CD8-positive, alpha-beta T cell (primary cell): ENCODE measurements at regions of chr2 and their contacts with region 1.

Region 1: GRCh38 chr2:174697255-174697654 is 67.0 kb downstream of the CHRNA1 start:
- DNase-seq: peak; percentile 20 to 79 (median 61)
- ATAC-seq: peak; percentile 91
- H3K4me3 ChIP-seq: no peak overlapping the region
- H3K4me3 Mint-ChIP-seq: no peak overlapping the region
- H3K27ac ChIP-seq: no peak overlapping the region
- H3K27ac Mint-ChIP-seq: no peak overlapping the region
- H3K4me1 ChIP-seq: no peaks in the 10 kb centered on the region
- H3K4me1 Mint-ChIP-seq: peaks cover 7% of the 10 kb centered on the region
- H3K27me3 ChIP-seq: no peaks in the 10 kb centered on the region
- H3K27me3 Mint-ChIP-seq: no peaks in the 10 kb centered on the region
- CTCF ChIP-seq: peak; percentile 79

Region 2: GRCh38 chr2:174536304-174536703 is 161.0 kb before region 1 on chr2:
- CTCF ChIA-PET with region 1: no interaction called
- POLR2A ChIA-PET with region 1: no interaction called
- intact Hi-C with region 1: no loop called
- DNase-seq: no peak
- ATAC-seq: no peak
- H3K4me3 ChIP-seq: no peak overlapping the region
- H3K4me3 Mint-ChIP-seq: no peak overlapping the region
- H3K27ac ChIP-seq: no peak overlapping the region
- H3K27ac Mint-ChIP-seq: no peak overlapping the region
- H3K4me1 ChIP-seq: no peaks in the 10 kb centered on the region
- H3K4me1 Mint-ChIP-seq: peaks cover 6% of the 10 kb centered on the region
- H3K27me3 ChIP-seq: peaks cover 0 to 2% of the 10 kb centered on the region in 2 experiments
- H3K27me3 Mint-ChIP-seq: peaks cover 4% of the 10 kb centered on the region
- CTCF ChIP-seq: no peak

Region 3: DNA sequence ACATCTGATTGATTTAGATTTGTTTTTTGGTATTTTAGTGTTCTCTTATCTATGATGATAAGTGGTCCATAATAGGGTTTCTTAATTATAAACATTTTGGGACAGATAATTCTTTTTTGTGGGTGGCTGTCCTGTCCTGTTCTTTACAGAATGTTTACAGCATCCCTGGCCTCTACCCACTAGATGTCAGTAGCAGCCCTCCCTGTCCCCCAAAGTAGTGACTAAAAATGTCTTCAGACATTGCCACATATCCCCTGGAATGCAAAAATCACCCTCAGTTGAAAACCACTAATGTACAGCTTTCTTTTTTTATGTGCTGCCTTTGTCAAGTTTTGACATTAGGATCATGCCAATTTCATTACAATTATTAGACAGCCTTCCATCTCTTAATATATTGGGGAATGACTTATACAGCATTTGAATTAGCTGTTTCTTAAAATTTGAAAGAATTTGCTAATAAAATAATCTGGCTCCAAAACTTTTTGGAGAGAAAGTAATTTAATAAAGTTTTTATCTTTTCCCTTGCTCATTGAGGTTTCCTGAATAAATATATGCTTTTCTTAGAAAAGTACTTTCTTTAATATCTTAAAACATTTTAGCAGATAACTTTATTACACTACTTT is 119.2 kb before region 1 on chr2:
- CTCF ChIA-PET with region 1: interaction called, 12 read pairs
- POLR2A ChIA-PET with region 1: no interaction called
- intact Hi-C with region 1: no loop called
- DNase-seq: peak in 6 of 9 experiments; percentile 33 to 87 (median 67)
- ATAC-seq: peak; percentile 84
- H3K4me3 ChIP-seq: no peak overlapping the region
- H3K4me3 Mint-ChIP-seq: no peak overlapping the region
- H3K27ac ChIP-seq: peak overlapping the region in 1 of 2 experiments; percentile 5
- H3K27ac Mint-ChIP-seq: peak overlapping the region; percentile 83
- H3K4me1 ChIP-seq: peaks cover 65% of the 10 kb centered on the region
- H3K4me1 Mint-ChIP-seq: peaks cover 80% of the 10 kb centered on the region
- H3K27me3 ChIP-seq: no peaks in the 10 kb centered on the region
- H3K27me3 Mint-ChIP-seq: no peaks in the 10 kb centered on the region
- CTCF ChIP-seq: peak; percentile 83

Region 4: GRCh38 chr2:174717273-174717672 is 20.0 kb after region 1 on chr2:
- CTCF ChIA-PET with region 1: interaction called, 14 read pairs
- POLR2A ChIA-PET with region 1: interaction called, 3 read pairs
- intact Hi-C with region 1: no loop called
- DNase-seq: peak in 3 of 9 experiments; percentile 52 to 71 (median 52)
- ATAC-seq: peak; percentile 77
- H3K4me3 ChIP-seq: peak overlapping the region; percentile 13 to 41
- H3K4me3 Mint-ChIP-seq: peak overlapping the region; percentile 67
- H3K27ac ChIP-seq: no peak overlapping the region
- H3K27ac Mint-ChIP-seq: peak overlapping the region; percentile 56
- H3K4me1 ChIP-seq: peaks cover 32% of the 10 kb centered on the region
- H3K4me1 Mint-ChIP-seq: peaks cover 31% of the 10 kb centered on the region
- H3K27me3 ChIP-seq: no peaks in the 10 kb centered on the region
- H3K27me3 Mint-ChIP-seq: no peaks in the 10 kb centered on the region
- CTCF ChIP-seq: no peak

Region 5: DNA sequence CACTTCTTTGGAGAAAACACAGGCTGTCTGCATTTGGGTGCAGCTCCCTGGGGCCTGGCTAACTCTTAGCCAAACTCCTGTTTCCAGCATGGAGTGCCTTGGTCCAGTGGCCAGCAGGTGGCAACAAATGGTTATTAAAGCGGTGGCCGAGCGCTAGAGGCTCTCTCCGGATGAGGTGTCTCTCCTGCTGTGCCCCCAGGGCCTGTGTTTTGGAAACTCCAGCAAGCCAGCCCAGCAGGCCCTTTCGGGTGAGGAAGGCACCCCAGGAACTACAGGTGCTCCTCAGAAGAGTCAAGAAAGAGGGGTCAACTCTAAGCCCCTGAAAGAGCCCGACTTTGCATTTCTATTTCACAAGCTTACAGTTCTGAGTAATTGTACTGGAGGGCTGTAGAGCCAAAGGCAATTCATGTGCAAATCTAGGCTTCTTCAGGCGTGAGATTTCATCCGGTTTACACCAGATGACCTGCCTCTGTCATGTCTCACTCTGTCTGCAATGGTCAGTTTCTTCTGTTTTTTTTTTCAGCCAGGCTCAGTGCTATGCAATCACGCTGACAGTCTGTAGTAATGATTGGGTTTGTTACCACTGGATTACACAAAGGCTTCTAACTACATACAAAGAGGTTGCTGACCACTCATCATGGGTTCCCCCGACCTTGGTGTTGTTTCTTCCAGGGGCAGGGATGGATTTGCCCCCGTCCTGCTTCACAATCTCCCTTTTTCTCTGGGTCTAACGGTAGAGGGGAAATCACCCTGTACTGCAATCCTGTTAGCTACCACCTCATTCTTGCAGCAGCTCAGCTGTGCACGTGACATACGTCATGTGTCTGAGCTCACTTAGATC is 74.6 kb after region 1 on chr2:
- CTCF ChIA-PET with region 1: interaction called, 33 read pairs
- POLR2A ChIA-PET with region 1: no interaction called
- intact Hi-C with region 1: loop called in 1 of 2 experiments (anchors 2 kb)
- DNase-seq: peak in 6 of 9 experiments; percentile 23 to 68 (median 51)
- ATAC-seq: peak; percentile 60
- H3K4me3 ChIP-seq: no peak overlapping the region
- H3K4me3 Mint-ChIP-seq: no peak overlapping the region
- H3K27ac ChIP-seq: no peak overlapping the region
- H3K27ac Mint-ChIP-seq: peak overlapping the region; percentile 3
- H3K4me1 ChIP-seq: peaks cover 14% of the 10 kb centered on the region
- H3K4me1 Mint-ChIP-seq: peaks cover 21% of the 10 kb centered on the region
- H3K27me3 ChIP-seq: no peaks in the 10 kb centered on the region
- H3K27me3 Mint-ChIP-seq: no peaks in the 10 kb centered on the region
- CTCF ChIP-seq: no peak

Region 6: DNA sequence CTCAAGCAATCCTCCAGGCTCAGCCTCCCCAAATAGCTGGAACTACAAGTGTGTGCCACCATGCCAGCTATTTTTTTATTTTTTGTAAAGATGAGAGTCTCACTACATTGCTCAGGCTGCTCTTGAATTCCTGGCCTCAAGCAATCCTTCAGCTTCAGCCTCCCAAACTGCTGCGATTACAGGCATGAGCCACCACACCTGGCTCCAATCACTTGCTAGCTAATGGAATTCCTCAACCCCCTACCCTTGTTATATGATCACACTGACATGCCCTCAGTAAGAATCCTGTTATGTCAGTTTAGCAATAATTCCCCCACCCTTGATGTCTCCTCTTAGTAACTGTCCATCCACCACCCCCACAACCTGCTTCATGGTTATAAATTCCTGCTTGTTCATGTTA is 295.6 kb after region 1 on chr2:
- CTCF ChIA-PET with region 1: interaction called, 68 read pairs
- POLR2A ChIA-PET with region 1: interaction called, 6 read pairs
- intact Hi-C with region 1: loop called (anchors 1 kb)
- DNase-seq: no peak
- ATAC-seq: no peak
- H3K4me3 ChIP-seq: no peak overlapping the region
- H3K4me3 Mint-ChIP-seq: no peak overlapping the region
- H3K27ac ChIP-seq: no peak overlapping the region
- H3K27ac Mint-ChIP-seq: no peak overlapping the region
- H3K4me1 ChIP-seq: no peaks in the 10 kb centered on the region
- H3K4me1 Mint-ChIP-seq: peaks cover 6% of the 10 kb centered on the region
- H3K27me3 ChIP-seq: no peaks in the 10 kb centered on the region
- H3K27me3 Mint-ChIP-seq: peaks cover 12% of the 10 kb centered on the region
- CTCF ChIP-seq: no peak

Region 7: DNA sequence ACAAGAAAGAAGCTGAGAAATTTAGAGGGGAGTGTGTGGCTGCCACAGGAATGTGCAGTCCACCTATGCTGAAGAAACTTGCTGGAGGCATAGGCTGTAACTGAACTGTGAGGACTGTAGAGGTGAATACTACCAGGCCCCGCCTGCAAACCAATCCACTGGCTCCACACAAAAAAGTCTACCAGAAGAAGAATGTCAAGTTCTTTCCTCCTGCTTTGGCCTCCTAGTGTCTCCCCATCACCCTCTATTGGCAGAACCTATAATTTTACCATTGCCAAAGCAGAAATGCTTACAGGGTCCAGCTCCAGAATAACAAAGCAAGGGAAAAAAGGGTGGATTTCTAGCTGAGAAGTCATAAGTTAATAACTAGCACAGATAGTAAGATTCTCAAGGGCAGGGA is 490.1 kb after region 1 on chr2:
- CTCF ChIA-PET with region 1: no interaction called
- POLR2A ChIA-PET with region 1: no interaction called
- intact Hi-C with region 1: loop called (anchors 5 to 10 kb)
- DNase-seq: peak in 2 of 9 experiments; percentile 24 to 40
- ATAC-seq: peak; percentile 68
- H3K4me3 ChIP-seq: no peak overlapping the region
- H3K4me3 Mint-ChIP-seq: no peak overlapping the region
- H3K27ac ChIP-seq: no peak overlapping the region
- H3K27ac Mint-ChIP-seq: no peak overlapping the region
- H3K4me1 ChIP-seq: no peaks in the 10 kb centered on the region
- H3K4me1 Mint-ChIP-seq: no peaks in the 10 kb centered on the region
- H3K27me3 ChIP-seq: no peaks in the 10 kb centered on the region
- H3K27me3 Mint-ChIP-seq: peaks cover 14% of the 10 kb centered on the region
- CTCF ChIP-seq: peak; percentile 11

Region 8: DNA sequence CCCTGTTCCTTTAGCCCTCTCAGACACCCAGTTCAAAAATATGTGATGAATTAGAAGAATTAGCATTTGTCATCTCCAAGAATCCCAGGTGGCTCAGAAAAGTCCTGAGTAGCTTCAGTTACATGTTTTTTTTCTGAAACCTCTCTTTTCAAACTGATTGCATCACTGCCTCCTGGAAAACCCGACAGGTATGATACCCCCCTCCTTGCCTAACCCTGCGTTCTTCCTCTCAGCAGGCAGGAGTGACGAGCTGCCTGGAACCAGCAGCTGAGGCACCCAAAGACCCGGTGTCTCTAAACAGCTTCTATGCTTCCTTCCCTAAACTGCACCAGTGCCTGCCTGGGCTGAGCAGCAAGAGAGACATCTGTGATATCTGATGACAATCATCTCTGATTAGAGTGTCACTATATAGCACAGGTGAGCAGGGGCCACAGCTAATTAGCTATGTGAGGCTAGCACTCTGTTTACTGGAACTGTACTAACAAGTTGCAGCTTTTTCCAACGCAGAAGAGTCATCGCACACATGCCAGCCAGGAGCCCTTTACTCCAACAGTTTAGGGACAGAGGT is 860.6 kb after region 1 on chr2:
- CTCF ChIA-PET with region 1: no interaction called
- POLR2A ChIA-PET with region 1: no interaction called
- intact Hi-C with region 1: no loop called
- DNase-seq: no peak
- ATAC-seq: no peak
- H3K4me3 ChIP-seq: no peak overlapping the region
- H3K4me3 Mint-ChIP-seq: no peak overlapping the region
- H3K27ac ChIP-seq: no peak overlapping the region
- H3K27ac Mint-ChIP-seq: no peak overlapping the region
- H3K4me1 ChIP-seq: no peaks in the 10 kb centered on the region
- H3K4me1 Mint-ChIP-seq: no peaks in the 10 kb centered on the region
- H3K27me3 ChIP-seq: no peaks in the 10 kb centered on the region
- H3K27me3 Mint-ChIP-seq: peaks cover 13% of the 10 kb centered on the region
- CTCF ChIP-seq: no peak

Region 9: GRCh38 chr2:176096986-176097819 is 1399.9 kb after region 1 on chr2:
- CTCF ChIA-PET with region 1: interaction called, 3 read pairs
- POLR2A ChIA-PET with region 1: no interaction called
- intact Hi-C with region 1: loop called in 1 of 2 experiments (anchors 5 kb)
- DNase-seq: peak in 8 of 9 experiments; percentile 25 to 76 (median 56)
- ATAC-seq: peak; percentile 76
- H3K4me3 ChIP-seq: peak overlapping the region; percentile 38 to 51
- H3K4me3 Mint-ChIP-seq: peak overlapping the region; percentile 71
- H3K27ac ChIP-seq: no peak overlapping the region
- H3K27ac Mint-ChIP-seq: no peak overlapping the region
- H3K4me1 ChIP-seq: peaks cover 27% of the 10 kb centered on the region
- H3K4me1 Mint-ChIP-seq: peaks cover 24% of the 10 kb centered on the region
- H3K27me3 ChIP-seq: peaks cover 75 to 85% of the 10 kb centered on the region in 2 experiments
- H3K27me3 Mint-ChIP-seq: peaks cover 81% of the 10 kb centered on the region
- CTCF ChIP-seq: peak; percentile 77